Sigmoid colon (tissue), 7 donors: ENCODE measurements at regions of chr3 and their contacts with region 1.

Region 1: DNA sequence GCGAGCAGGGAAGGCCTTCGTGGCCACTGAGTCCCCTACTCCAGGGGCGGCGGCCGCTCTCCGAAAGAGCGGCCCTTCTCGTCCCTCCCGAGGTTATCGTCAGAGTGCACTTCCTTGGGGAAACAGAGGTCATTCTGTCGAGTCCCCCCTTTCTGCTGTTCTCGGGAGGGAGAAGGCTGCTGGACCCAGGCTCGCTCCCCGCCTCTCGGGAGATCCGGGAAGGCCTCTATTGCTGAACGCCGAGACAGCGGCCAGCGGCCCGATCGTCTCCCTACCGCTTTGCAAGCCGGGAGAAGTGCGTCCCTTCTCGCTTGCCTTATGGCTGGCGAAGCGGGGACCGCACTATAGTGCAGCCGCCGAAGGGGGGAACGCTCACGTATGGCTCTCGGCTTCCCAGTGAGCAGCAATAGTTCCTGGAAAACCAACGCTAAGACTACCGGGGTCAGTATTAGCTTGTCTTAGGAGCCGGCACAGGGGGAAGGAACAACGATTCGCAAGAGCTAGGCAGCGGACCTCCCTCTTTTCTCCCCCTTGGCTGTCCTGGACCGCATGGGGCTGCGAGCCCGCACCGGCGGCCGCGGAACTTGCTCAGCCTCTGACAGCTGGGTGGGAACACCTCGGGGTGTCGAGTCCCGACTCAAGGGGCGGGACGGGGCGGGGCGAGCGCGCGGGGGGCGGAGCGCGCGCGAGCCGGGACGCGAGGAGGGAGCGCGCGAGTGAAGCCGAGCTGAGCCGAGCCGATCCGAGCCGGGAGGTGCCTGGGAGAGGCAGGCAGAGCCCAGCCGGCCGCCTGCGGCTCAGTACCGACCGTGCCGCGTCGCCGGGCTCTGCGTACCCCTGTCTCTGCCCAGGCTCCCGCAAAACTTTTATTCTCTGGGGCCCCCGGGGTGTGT is 930 bp upstream of the PPM1L start:
- DNase-seq: peak; percentile 97
- H3K4me3 ChIP-seq: peak overlapping the region; percentile 68 to 89 (median 79)
- H3K27ac ChIP-seq: peak overlapping the region; percentile 92 to 96 (median 94)
- H3K4me1 ChIP-seq: peaks cover 0 to 44% (median 32%) of the 10 kb centered on the region in 4 donors
- H3K27me3 ChIP-seq: no peaks in the 10 kb centered on the region
- CTCF ChIP-seq: no peak
- EP300 ChIP-seq: peak in 1 of 4 donors; percentile 9
- POLR2A ChIP-seq: peak; percentile 60 to 70

Region 2: DNA sequence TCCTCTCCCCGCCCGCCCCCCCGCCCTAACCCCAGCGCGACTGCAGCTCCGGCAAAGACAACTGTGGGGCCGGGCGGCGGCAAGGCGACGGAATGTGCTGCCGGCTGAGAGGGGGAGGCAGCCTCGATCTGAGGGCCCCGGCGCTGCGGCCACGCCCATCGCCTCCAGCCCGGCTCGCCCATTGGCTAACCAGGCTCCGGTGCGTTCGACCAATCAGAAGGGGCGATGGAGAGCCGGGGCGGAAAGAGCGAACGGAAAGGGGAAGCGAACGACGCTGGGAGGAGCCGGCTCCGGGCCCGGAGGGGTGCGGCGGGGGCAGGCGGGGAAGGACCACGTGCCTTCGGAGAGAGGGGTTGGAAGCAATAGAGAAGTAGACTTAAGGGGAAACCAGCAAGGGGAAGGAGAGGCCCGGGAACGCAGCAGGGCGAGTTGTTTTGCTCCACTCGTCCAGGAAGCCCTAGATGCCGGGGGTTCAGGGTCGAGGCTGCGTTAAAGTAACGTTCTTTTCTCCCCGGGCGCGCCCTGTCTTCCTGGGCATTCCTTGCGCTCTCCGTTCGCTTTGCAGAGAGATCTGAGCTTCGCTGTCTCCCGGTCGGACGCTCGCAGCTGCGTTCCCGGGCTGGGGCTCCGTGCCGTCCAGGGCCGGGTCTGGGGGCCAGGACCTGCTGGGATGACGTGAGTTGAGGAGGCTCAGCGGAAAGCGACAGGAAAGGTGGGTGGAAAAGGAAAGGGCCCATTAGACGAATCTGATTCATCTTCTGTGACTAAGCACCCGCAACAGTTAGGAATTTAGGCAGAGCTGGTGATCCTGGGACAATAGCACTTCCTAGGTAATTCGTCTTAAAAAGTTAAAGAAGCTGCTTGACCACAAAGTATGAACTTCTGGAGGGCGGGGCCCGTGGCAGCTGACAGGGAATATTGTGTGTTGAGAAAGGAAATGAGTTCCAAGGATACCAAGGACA is 189.4 kb before region 1 on chr3 and contains the start of gene KPNA4:
- intact Hi-C with region 1: loop called (anchors 2 kb)
- DNase-seq: peak; percentile 99
- H3K4me3 ChIP-seq: peak within 1 kb of the TSS; percentile 86 to 93 (median 88)
- H3K27ac ChIP-seq: peak within 1 kb of the TSS; percentile 98 to 99 (median 99)
- H3K4me1 ChIP-seq: peaks cover 0 to 50% (median 31%) of the 10 kb centered on the region in 4 donors
- H3K27me3 ChIP-seq: no peaks in the 10 kb centered on the region
- CTCF ChIP-seq: no peak
- EP300 ChIP-seq: no peak
- POLR2A ChIP-seq: peak; percentile 53 to 70
- total RNA-seq, gene KPNA4: 45.4 to 52.8 (median 49.2) TPM

Region 3: GRCh38 chr3:160801386-160802118 is 46.5 kb after region 1 on chr3:
- intact Hi-C with region 1: loop called (anchors 2 kb)
- DNase-seq: peak; percentile 82
- H3K4me3 ChIP-seq: peak overlapping the region in 3 of 4 donors; percentile 10 to 29 (median 25)
- H3K27ac ChIP-seq: peak overlapping the region; percentile 68 to 82 (median 77)
- H3K4me1 ChIP-seq: peaks cover 3 to 59% (median 40%) of the 10 kb centered on the region in 4 donors
- H3K27me3 ChIP-seq: no peaks in the 10 kb centered on the region
- CTCF ChIP-seq: no peak
- EP300 ChIP-seq: peak in 2 of 4 donors; percentile 4 to 15
- POLR2A ChIP-seq: no peak

Region 4: DNA sequence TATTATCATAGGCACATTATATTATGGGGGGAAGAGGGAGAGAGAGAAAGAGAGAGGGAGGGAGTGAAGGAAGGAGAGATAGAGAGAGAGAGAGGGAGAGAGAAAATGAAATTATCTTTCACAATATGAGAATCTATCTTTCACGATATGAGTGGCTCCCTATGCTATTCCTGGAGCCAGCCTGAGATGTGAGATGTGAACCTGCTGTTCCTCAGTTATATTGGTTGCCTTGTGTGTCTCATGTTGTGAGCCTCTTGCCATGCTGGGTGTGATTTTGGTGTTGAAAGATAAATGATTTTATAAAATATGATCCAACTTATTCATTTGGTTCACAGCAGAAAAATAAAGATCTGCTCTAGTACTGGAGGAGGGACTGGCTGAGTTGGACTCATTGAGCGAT is 149.6 kb after region 1 on chr3:
- intact Hi-C with region 1: no loop called
- DNase-seq: no peak
- H3K4me3 ChIP-seq: no peak overlapping the region
- H3K27ac ChIP-seq: no peak overlapping the region
- H3K4me1 ChIP-seq: no peaks in the 10 kb centered on the region
- H3K27me3 ChIP-seq: no peaks in the 10 kb centered on the region
- CTCF ChIP-seq: no peak
- EP300 ChIP-seq: no peak
- POLR2A ChIP-seq: no peak

Region 5: GRCh38 chr3:160941885-160942494 is 186.9 kb after region 1 on chr3:
- intact Hi-C with region 1: loop called (anchors 2 kb)
- DNase-seq: peak; percentile 81
- H3K4me3 ChIP-seq: no peak overlapping the region
- H3K27ac ChIP-seq: no peak overlapping the region
- H3K4me1 ChIP-seq: no peaks in the 10 kb centered on the region
- H3K27me3 ChIP-seq: no peaks in the 10 kb centered on the region
- CTCF ChIP-seq: peak; percentile 87 to 91 (median 90)
- EP300 ChIP-seq: no peak
- POLR2A ChIP-seq: no peak